ENCODE measurements at regions of chr4 and their contacts with region 1.

Region 1: GRCh38 chr4:64539234-64539849 is 130.1 kb upstream of the TECRL start:
- DNase-seq: peak; percentile 50
- H3K4me3 ChIP-seq: no peak overlapping the region
- H3K27ac ChIP-seq: no peak overlapping the region
- H3K4me1 ChIP-seq: no peaks in the 10 kb centered on the region
- H3K27me3 ChIP-seq: no peaks in the 10 kb centered on the region
- CTCF ChIP-seq: peak; percentile 89
- EP300 ChIP-seq: no peak
- RAD21 ChIP-seq: peak; percentile 90

Region 2: GRCh38 chr4:64158648-64159326 is 380.6 kb before region 1 on chr4:
- CTCF ChIA-PET with region 1: interaction called, 35 read pairs
- POLR2A ChIA-PET with region 1: no interaction called
- DNase-seq: peak; percentile 28
- H3K4me3 ChIP-seq: peak overlapping the region; percentile 43 to 61
- H3K27ac ChIP-seq: no peak overlapping the region
- H3K4me1 ChIP-seq: no peaks in the 10 kb centered on the region
- H3K27me3 ChIP-seq: no peaks in the 10 kb centered on the region
- CTCF ChIP-seq: peak; percentile 93
- EP300 ChIP-seq: no peak
- RAD21 ChIP-seq: peak; percentile 66

Region 3: DNA sequence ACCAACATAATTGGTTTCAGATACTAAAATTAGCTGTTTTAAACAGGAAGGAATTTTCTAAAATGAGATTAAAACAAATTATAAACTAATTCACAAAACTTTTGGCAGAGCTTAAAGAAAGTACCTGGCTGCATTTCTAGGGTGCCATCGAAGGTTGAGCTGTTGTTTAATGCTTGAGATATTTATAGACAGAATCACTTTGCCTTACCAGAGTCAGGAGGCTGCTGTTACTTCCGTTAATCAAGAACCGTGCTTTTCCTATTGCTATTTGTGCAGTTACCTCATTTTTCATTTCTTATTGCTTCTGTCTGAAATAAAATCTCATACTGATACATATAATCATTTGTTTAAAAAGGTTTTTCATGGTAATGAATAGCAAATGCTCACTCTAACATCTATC is 373.0 kb before region 1 on chr4:
- CTCF ChIA-PET with region 1: interaction called, 14 read pairs
- POLR2A ChIA-PET with region 1: no interaction called
- DNase-seq: no peak
- H3K4me3 ChIP-seq: no peak overlapping the region
- H3K27ac ChIP-seq: no peak overlapping the region
- H3K4me1 ChIP-seq: no peaks in the 10 kb centered on the region
- H3K27me3 ChIP-seq: no peaks in the 10 kb centered on the region
- CTCF ChIP-seq: no peak
- EP300 ChIP-seq: no peak
- RAD21 ChIP-seq: no peak

Region 4: DNA sequence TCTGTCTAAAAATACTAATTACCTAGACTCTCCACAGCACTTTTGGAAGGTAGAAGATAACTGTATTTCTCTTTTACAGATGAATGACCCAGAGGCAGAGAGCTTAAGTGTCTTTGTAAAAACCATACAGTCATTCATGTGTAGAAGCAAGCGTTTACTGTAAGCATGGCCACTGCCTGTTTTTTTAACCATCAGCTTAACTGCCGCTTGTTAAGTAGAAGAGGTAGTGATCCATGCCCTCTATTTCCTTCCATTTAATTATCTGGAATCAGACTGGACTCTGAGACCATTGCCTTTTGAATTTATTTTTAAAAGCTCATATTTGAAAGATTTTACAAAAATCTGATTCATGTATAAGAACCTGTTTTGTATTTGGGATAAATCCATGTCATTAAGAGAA is 18.9 kb before region 1 on chr4:
- CTCF ChIA-PET with region 1: interaction called, 18 read pairs
- POLR2A ChIA-PET with region 1: no interaction called
- DNase-seq: no peak
- H3K4me3 ChIP-seq: no peak overlapping the region
- H3K27ac ChIP-seq: no peak overlapping the region
- H3K4me1 ChIP-seq: no peaks in the 10 kb centered on the region
- H3K27me3 ChIP-seq: no peaks in the 10 kb centered on the region
- CTCF ChIP-seq: no peak
- EP300 ChIP-seq: no peak
- RAD21 ChIP-seq: no peak

Region 5: GRCh38 chr4:64551125-64551524 is 11.8 kb after region 1 on chr4:
- CTCF ChIA-PET with region 1: interaction called, 22 read pairs
- POLR2A ChIA-PET with region 1: no interaction called
- DNase-seq: no peak
- H3K4me3 ChIP-seq: no peak overlapping the region
- H3K27ac ChIP-seq: no peak overlapping the region
- H3K4me1 ChIP-seq: no peaks in the 10 kb centered on the region
- H3K27me3 ChIP-seq: no peaks in the 10 kb centered on the region
- CTCF ChIP-seq: no peak
- EP300 ChIP-seq: no peak
- RAD21 ChIP-seq: no peak

Region 6: GRCh38 chr4:64799751-64800150 is 260.4 kb after region 1 on chr4:
- CTCF ChIA-PET with region 1: no interaction called
- POLR2A ChIA-PET with region 1: no interaction called
- DNase-seq: no peak
- H3K4me3 ChIP-seq: no peak overlapping the region
- H3K27ac ChIP-seq: no peak overlapping the region
- H3K4me1 ChIP-seq: no peaks in the 10 kb centered on the region
- H3K27me3 ChIP-seq: no peaks in the 10 kb centered on the region; the same call in 1 of the 2 replicates
- CTCF ChIP-seq: no peak
- EP300 ChIP-seq: no peak
- RAD21 ChIP-seq: no peak

Measured in SK-N-SH (cell line).